ENCODE measurements at regions of chr14 and their contacts with region 1.

Region 1: GRCh38 chr14:39376667-39377403 is 55.4 kb downstream of the FBXO33 start:
- DNase-seq: no peak
- ATAC-seq: no peak
- H3K4me3 ChIP-seq: no peak overlapping the region
- H3K4me3 Mint-ChIP-seq: no peak overlapping the region
- H3K27ac ChIP-seq: no peak overlapping the region
- H3K27ac Mint-ChIP-seq: no peak overlapping the region
- H3K4me1 ChIP-seq: no peaks in the 10 kb centered on the region
- H3K4me1 Mint-ChIP-seq: peaks cover 3 to 9% (median 4%) of the 10 kb centered on the region in 3 donors
- H3K27me3 ChIP-seq: no peaks in the 10 kb centered on the region
- H3K27me3 Mint-ChIP-seq: no peaks in the 10 kb centered on the region

Region 2: DNA sequence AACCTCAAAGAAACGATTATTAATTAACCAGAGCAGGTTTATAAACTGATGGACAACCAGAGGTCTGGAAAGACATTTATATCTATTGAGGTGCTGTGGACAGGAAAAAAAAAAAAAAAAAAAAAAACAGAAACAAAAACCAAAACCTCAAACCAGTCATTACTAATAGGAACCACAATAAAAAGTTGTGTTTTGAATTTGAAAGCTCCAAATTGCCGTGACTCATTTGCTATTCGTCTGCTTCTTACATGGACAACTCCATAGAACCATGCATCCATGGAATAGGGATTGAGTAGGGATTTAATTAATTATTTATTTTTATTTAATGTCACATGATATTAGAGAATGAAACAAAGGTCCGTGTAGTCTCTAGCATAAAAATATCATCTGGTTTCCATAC is 1303.2 kb before region 1 on chr14:
- CTCF ChIA-PET with region 1: no interaction called
- POLR2A ChIA-PET with region 1: interaction called in 1 of 2 experiments, 11 read pairs
- DNase-seq: peak in 1 of 35 experiments; percentile 51
- ATAC-seq: no peak
- H3K4me3 ChIP-seq: no peak overlapping the region
- H3K4me3 Mint-ChIP-seq: peak overlapping the region in 2 of 3 donors; percentile 51 to 65
- H3K27ac ChIP-seq: peak overlapping the region; percentile 86
- H3K27ac Mint-ChIP-seq: peak overlapping the region; percentile 91 to 93
- H3K4me1 ChIP-seq: peaks cover 18 to 27% of the 10 kb centered on the region in 2 experiments
- H3K4me1 Mint-ChIP-seq: peaks cover 64 to 85% (median 80%) of the 10 kb centered on the region in 3 donors
- H3K27me3 ChIP-seq: no peaks in the 10 kb centered on the region
- H3K27me3 Mint-ChIP-seq: no peaks in the 10 kb centered on the region

Region 3: DNA sequence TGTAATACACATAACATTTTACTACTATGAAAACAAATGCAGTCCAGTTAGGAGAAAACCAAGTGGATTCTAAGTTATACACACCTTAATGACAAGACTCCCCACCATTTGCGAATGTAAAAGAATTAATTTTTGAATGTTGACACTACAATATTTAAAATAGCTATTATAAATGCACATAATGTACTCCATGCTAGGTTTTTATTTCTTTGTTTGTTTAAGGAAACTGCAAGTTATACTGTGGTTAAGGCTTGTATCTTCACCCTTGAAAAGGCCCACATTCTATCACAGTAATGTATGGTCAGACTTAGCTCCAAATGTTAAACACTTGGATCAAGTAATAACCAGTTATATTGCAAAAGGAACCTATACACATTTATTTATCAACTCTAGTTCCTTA is 215.9 kb before region 1 on chr14:
- CTCF ChIA-PET with region 1: no interaction called
- POLR2A ChIA-PET with region 1: no interaction called
- DNase-seq: no peak
- ATAC-seq: no peak
- H3K4me3 ChIP-seq: no peak overlapping the region
- H3K4me3 Mint-ChIP-seq: no peak overlapping the region
- H3K27ac ChIP-seq: no peak overlapping the region
- H3K27ac Mint-ChIP-seq: no peak overlapping the region
- H3K4me1 ChIP-seq: peaks cover 0 to 3% of the 10 kb centered on the region in 2 experiments
- H3K4me1 Mint-ChIP-seq: peaks cover 34 to 41% (median 39%) of the 10 kb centered on the region in 3 donors
- H3K27me3 ChIP-seq: no peaks in the 10 kb centered on the region
- H3K27me3 Mint-ChIP-seq: no peaks in the 10 kb centered on the region

Region 4: DNA sequence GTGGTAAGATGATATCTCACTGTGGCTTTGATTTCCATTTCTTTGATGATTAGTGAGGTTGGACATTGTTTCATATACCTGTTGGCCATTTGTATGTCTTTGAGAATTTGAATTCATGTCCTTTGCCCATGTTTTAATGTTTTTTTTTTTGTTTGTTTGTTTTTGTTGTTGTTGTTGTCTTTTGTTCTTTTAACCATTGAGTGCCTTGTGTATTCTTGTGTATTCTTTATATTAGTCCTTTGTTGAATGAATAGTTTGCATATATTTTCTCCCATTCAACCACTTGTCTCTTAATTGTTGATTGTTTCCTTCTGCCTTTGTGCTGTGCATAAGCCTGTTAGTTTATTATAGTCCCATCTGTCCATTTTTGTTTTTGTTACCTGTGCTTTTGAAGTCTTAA is 16.5 kb before region 1 on chr14:
- CTCF ChIA-PET with region 1: no interaction called
- POLR2A ChIA-PET with region 1: no interaction called
- DNase-seq: no peak
- ATAC-seq: no peak
- H3K4me3 ChIP-seq: no peak overlapping the region
- H3K4me3 Mint-ChIP-seq: no peak overlapping the region
- H3K27ac ChIP-seq: no peak overlapping the region
- H3K27ac Mint-ChIP-seq: no peak overlapping the region
- H3K4me1 ChIP-seq: no peaks in the 10 kb centered on the region
- H3K4me1 Mint-ChIP-seq: peaks cover 6 to 25% (median 18%) of the 10 kb centered on the region in 3 donors
- H3K27me3 ChIP-seq: no peaks in the 10 kb centered on the region
- H3K27me3 Mint-ChIP-seq: no peaks in the 10 kb centered on the region

Measured in T-cell (primary cell).